ENCODE measurements at regions of chr3 and their contacts with region 1.

Region 1: DNA sequence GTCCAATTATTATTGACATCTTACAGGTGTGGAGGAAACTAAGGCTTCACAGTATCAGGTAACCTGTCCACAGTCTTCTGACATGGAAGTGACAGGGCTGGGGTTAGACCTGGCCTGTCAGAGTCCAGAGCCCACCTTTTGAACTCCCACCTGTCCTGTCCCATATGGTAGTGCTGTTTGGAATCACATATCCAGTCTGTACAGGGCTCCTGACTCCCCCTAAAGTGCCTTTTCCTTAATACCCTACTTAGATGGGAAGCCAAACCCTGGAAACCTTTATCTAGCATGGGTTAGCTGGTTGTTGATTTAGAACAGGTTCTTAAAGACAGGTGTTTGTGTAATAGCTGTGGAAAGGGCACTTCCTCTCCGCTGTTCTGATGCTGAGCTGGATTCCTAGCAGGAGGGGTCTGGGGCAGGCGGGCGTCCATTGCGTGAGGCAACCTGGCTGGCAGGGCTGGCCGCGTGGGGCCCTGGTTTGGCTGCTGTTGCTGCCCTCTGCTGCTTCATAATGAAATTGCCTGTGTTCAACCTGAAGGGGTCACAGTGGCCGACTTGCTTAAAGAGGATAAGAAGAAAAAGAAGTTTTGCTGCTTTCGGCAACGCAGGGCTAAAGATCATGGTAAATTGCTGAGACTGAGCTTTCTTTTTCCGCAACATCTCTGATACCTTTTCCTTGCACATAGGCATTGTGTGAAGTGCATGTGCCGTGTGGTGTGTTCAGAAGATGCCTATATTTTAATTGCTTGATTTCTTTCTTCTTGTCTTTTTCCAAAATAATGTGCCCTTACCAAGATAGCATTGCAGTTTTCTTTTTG is 136.2 kb downstream of the CHDH start:
- DNase-seq: peak; percentile 87
- ATAC-seq: peak; percentile 95
- H3K4me3 Mint-ChIP-seq: no peak overlapping the region
- H3K27ac Mint-ChIP-seq: no peak overlapping the region
- H3K4me1 Mint-ChIP-seq: peaks cover 3% of the 10 kb centered on the region
- H3K27me3 Mint-ChIP-seq: no peaks in the 10 kb centered on the region; the same call in 1 of the 2 replicates
- CTCF ChIP-seq: peak; percentile 63

Region 2: DNA sequence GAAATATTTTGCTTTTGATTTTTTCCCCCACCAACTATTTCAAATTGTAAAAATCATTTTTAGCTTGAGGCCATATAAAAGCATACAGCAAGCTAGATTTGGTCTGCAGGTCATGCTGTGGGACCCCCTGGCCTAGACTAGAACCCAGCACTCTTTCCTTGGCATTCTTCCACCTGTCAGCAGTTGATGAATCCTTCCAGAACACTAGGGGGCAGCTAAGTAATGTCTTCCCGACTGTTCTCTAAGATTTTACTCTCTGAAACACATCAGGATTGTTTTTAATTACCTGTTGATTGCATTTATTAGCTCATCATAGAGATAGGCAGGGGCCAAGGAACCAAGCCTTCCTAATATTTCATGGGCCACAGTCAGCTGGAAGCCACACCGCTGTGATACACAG is 41.2 kb before region 1 on chr3:
- CTCF ChIA-PET with region 1: interaction called, 10 read pairs
- POLR2A ChIA-PET with region 1: no interaction called
- DNase-seq: no peak
- ATAC-seq: peak; percentile 48; the same call in 1 of the 2 replicates
- H3K4me3 Mint-ChIP-seq: no peak overlapping the region
- H3K27ac Mint-ChIP-seq: no peak overlapping the region
- H3K4me1 Mint-ChIP-seq: no peaks in the 10 kb centered on the region
- H3K27me3 Mint-ChIP-seq: no peaks in the 10 kb centered on the region
- CTCF ChIP-seq: no peak

Region 3: DNA sequence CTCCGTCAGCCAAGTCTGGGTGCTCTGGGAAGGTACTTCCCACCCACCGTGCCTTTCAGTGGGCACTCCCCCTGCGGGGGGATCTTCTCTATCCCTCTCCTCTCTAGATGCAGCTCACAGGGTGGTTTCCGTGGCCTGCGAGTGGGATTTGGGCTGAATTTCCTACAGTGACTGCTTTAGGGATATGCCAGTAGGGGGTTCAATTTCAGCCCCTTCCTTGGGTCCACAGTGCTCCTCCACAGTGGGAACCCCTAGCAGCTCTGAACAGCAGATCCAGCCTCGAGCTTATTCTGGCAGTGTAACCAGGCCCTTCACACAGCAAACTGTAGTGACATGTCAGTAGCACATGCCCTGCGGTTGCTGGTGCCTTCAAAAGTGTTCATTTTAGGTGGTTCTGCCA is 19.5 kb before region 1 on chr3:
- CTCF ChIA-PET with region 1: interaction called, 10 read pairs
- POLR2A ChIA-PET with region 1: no interaction called
- DNase-seq: no peak
- ATAC-seq: no peak
- H3K4me3 Mint-ChIP-seq: no peak overlapping the region
- H3K27ac Mint-ChIP-seq: no peak overlapping the region
- H3K4me1 Mint-ChIP-seq: no peaks in the 10 kb centered on the region
- H3K27me3 Mint-ChIP-seq: no peaks in the 10 kb centered on the region; the same call in 1 of the 2 replicates
- CTCF ChIP-seq: no peak

Region 4: DNA sequence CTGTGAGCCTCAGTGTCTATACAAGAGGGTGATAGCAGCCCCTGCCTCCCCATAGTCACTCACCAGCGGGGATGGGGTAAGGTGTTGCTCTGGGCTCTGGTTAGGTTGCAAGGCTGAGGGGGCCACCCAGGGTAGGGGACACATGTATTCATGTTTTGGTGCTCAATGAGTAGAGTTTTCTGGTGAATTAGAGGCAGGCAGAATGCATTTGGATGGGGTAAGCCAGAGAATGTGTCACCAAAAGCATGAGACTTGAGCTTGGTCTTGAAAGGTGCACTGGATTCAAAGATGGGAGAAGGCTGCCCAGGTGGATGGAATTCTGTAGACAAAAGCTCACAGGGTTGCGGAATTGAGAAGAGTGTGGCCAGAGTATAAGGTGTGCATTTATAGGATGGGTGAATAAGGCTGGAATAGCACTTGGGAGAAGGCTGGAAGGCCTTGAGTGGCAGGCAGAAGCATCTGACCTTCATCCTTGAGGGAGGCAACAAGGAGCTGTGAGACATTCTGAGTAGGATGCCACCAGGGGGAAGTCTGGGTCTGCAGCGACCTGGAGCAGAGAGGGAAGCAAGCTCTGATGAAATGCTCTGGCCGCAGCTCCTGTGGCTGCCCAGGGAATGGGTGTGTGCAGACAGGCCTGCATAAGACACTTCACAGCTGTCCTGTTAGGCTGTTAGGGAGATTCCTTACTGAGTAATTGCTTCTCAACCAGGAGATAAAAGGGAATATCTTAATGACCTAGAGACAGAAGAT is 13.5 kb before region 1 on chr3:
- CTCF ChIA-PET with region 1: interaction called, 14 read pairs
- POLR2A ChIA-PET with region 1: no interaction called
- DNase-seq: no peak
- ATAC-seq: peak; percentile 64
- H3K4me3 Mint-ChIP-seq: no peak overlapping the region
- H3K27ac Mint-ChIP-seq: no peak overlapping the region
- H3K4me1 Mint-ChIP-seq: no peaks in the 10 kb centered on the region
- H3K27me3 Mint-ChIP-seq: no peaks in the 10 kb centered on the region
- CTCF ChIP-seq: no peak

Region 5: DNA sequence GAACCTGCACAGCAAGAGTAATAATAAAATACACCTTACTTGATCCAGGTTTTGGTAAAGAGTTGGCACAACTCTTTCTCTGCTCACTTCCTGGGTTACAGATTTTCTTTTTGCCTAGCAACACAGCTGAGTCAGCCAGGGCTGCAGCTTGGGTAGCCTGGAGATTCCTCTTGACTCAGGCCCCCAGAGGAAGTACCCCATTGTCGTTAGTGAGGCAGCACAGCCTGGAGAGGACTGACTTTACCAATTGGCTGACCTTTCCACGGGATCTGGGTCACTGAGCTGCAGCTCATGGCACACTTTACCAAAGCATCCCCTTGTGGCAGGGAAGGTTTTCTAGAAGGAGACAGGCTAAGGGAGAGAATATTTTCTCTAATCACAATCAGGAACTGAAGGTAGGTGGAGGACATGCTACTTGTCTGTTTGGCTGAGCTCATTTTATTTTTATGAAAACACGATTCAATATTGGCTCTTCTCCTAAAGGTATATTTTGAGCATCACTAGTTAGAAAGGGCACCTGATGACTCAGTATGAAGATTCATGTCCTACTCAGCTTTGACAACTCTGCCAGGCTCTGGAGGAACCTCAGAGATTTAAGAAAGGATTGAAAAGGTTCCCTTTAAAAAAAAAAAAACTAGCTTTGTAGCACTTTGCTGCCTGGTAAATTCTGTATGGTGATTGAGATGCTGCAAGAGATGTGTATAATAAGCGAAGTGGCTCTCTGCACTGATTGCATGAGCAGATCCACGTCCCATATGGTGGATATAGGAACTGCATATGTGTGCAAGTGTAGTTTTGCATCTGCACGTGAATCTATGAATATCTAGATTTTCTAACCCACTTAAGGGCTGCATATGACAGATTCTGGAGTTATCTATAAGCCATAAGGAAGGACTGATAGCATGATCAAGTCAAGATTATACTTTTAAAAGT is 11.4 kb after region 1 on chr3:
- CTCF ChIA-PET with region 1: interaction called, 10 read pairs
- POLR2A ChIA-PET with region 1: no interaction called
- DNase-seq: no peak
- ATAC-seq: peak; percentile 86
- H3K4me3 Mint-ChIP-seq: no peak overlapping the region
- H3K27ac Mint-ChIP-seq: no peak overlapping the region
- H3K4me1 Mint-ChIP-seq: peaks cover 9% of the 10 kb centered on the region
- H3K27me3 Mint-ChIP-seq: no peaks in the 10 kb centered on the region
- CTCF ChIP-seq: no peak